A673 (cell line): ENCODE measurements at regions of chr5 and their contacts with region 1.

Region 1: DNA sequence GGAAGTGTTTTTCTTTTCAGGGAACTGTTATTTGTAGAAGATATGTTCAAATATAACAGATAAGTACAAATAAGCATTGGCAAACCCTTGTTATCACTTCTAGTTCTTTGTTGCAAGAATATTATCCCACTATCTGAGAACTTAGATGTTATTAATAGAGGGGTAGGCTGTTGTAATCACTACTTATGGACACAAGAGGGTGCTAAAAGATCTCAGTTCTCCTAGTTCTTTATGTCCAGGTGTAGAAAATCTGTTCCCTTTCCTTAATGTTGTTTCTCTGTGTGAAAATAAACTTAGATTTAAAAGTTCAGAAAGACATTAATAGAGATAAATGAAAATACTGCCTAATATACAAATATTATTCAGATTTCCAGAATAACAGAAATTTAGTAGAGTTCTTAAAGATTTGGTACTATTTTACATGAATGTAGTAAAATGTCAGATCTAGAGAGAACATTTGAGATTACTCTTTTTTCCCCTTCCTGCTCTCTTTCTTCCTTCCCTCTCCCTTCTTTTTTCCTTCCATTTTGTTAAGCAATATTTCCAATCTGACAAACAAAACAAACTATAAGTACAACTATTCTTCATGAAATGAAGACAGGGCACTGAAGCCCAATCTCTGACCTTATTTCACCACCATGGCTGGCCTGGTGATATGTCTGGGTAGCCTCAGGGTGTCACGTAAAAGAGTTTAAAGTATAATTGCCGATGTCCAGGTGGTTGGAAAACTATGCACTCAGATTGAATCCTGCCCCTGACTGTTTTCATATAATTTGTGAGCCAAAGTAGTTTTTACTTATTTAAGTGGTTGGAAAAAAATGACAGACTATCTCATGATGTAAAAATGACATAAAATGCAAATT is 43.6 kb upstream of the C5orf46 start:
- DNase-seq: peak; percentile 65
- H3K4me3 ChIP-seq: no peak overlapping the region
- H3K27ac ChIP-seq: no peak overlapping the region
- H3K4me1 ChIP-seq: no peaks in the 10 kb centered on the region
- H3K27me3 ChIP-seq: no peaks in the 10 kb centered on the region
- CTCF ChIP-seq: peak; percentile 75

Region 2: GRCh38 chr5:147727200-147727599 is 222.7 kb before region 1 on chr5:
- CTCF ChIA-PET with region 1: no interaction called
- POLR2A ChIA-PET with region 1: no interaction called
- intact Hi-C with region 1: no loop called
- DNase-seq: no peak
- H3K4me3 ChIP-seq: no peak overlapping the region
- H3K27ac ChIP-seq: no peak overlapping the region
- H3K4me1 ChIP-seq: peaks cover 12% of the 10 kb centered on the region
- H3K27me3 ChIP-seq: no peaks in the 10 kb centered on the region
- CTCF ChIP-seq: no peak

Region 3: DNA sequence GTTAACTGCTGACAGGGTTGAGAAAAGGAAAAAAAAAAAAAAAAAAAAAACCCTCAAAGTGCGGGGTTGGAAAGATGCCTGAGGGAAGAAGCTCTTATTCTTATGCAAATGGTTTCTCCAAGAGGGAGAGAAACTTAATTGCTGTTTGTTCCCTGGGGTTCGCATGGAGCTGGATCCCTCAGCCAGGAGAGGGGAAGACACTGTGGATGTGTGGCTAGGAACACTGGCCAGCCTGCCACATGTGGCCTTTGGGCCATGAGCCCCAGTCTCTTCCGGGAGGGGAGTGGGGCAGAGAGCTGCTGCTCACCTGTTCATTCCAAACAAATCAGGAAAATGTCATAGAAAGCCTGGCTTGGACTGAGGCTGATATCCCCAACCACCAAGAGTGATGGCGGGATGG is 80.8 kb before region 1 on chr5:
- CTCF ChIA-PET with region 1: no interaction called
- POLR2A ChIA-PET with region 1: no interaction called
- intact Hi-C with region 1: no loop called
- DNase-seq: peak; percentile 39
- H3K4me3 ChIP-seq: no peak overlapping the region
- H3K27ac ChIP-seq: no peak overlapping the region
- H3K4me1 ChIP-seq: peaks cover 5% of the 10 kb centered on the region
- H3K27me3 ChIP-seq: no peaks in the 10 kb centered on the region
- CTCF ChIP-seq: no peak

Region 4: DNA sequence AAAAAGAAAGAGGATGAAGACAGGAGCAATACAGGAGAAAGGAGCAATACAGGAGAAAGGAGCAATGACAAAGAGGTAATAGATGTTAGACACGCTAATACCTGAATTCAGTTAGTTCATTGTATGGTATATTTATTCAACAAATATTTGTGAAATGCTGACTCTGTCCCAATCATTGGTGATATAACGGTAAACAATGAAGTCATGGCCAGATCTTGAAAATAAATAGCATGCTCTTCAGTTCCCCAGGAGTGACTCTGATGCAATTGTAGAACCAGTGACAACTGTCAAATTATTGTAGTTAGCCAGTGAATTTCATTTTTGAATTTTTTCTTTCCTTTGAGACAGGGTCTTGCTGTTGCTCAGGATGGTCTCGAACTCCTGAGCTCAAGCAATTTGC is 170.4 kb after region 1 on chr5:
- CTCF ChIA-PET with region 1: no interaction called
- POLR2A ChIA-PET with region 1: no interaction called
- intact Hi-C with region 1: loop called (anchors 2 kb)
- DNase-seq: no peak
- H3K4me3 ChIP-seq: no peak overlapping the region
- H3K27ac ChIP-seq: no peak overlapping the region
- H3K4me1 ChIP-seq: no peaks in the 10 kb centered on the region
- H3K27me3 ChIP-seq: peaks cover 17% of the 10 kb centered on the region
- CTCF ChIP-seq: no peak

Region 5: GRCh38 chr5:148482691-148483462 is 532.9 kb after region 1 on chr5:
- CTCF ChIA-PET with region 1: no interaction called
- POLR2A ChIA-PET with region 1: no interaction called
- intact Hi-C with region 1: loop called (anchors 10 kb)
- DNase-seq: peak; percentile 67
- H3K4me3 ChIP-seq: no peak overlapping the region
- H3K27ac ChIP-seq: no peak overlapping the region
- H3K4me1 ChIP-seq: no peaks in the 10 kb centered on the region
- H3K27me3 ChIP-seq: peaks cover 74% of the 10 kb centered on the region
- CTCF ChIP-seq: peak; percentile 86

Region 6: GRCh38 chr5:148632255-148633066 is 682.5 kb after region 1 on chr5:
- CTCF ChIA-PET with region 1: no interaction called
- POLR2A ChIA-PET with region 1: no interaction called
- intact Hi-C with region 1: no loop called
- DNase-seq: no peak
- H3K4me3 ChIP-seq: no peak overlapping the region
- H3K27ac ChIP-seq: no peak overlapping the region
- H3K4me1 ChIP-seq: no peaks in the 10 kb centered on the region
- H3K27me3 ChIP-seq: peaks cover 66% of the 10 kb centered on the region
- CTCF ChIP-seq: no peak